Naive thymus-derived CD4-positive, alpha-beta T cell (primary cell): ENCODE measurements at regions of chr10 and their contacts with region 1.

Region 1: DNA sequence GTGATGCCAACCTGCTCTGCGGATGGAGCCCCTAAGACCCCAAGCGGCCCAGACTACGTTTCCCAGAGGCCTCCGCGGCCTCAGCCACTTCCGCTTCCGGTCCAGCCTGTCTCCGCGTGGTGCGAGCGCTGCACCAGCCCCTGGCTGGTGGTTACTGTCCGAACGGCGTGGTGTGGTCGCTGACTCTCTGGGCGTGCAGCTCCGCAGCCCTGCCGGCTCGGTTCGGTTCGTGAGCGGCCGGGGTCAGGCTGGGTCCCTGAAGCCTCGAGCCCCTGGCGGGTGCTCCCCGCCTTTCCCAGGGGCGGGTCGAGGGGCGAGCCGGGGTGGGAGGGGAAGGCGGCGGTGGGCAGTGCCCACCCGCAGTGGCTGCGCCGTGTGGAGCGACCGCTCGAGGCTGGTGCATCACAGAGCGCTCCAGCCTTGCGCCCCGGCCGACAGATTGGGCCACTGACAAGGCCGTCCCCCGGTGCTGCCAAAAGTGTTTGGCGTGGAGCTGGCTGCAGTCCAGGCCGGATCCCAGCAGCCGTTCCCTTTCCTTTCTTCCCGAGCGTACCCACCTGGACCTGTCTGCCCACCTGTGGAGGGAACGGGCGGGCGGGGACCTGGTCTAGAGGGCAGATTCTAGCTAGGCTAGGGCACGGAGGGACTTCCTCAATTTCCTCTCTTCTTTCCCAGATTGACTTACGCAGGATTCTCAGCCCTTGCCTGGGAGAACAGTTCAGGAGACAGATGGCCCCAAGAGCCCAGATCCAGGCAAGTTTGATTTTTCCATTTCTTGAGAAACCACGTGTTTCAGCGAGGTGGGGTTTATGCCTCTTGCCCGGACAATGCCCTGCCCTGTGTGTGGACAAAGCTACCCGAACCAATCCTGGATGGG is at the start of gene ZNF485:
- DNase-seq: peak; percentile 41 to 61 (median 56)
- ATAC-seq: peak; percentile 90
- H3K4me3 ChIP-seq: peak within 1 kb of the TSS; percentile 82
- H3K4me3 Mint-ChIP-seq: peak within 1 kb of the TSS; percentile 80 to 93 (median 85)
- H3K27ac ChIP-seq: peak within 1 kb of the TSS; percentile 75
- H3K27ac Mint-ChIP-seq: peak within 1 kb of the TSS; percentile 62 to 88 (median 77)
- H3K4me1 ChIP-seq: peaks cover 11 to 12% of the 10 kb centered on the region in 2 donors
- H3K4me1 Mint-ChIP-seq: peaks cover 11 to 47% (median 45%) of the 10 kb centered on the region in 7 donors
- H3K27me3 ChIP-seq: no peaks in the 10 kb centered on the region
- H3K27me3 Mint-ChIP-seq: peaks cover 0 to 8% (median 0%) of the 10 kb centered on the region in 5 donors
- total RNA-seq, gene ZNF485: 2.9 to 13.1 (median 5.3) TPM

Region 2: DNA sequence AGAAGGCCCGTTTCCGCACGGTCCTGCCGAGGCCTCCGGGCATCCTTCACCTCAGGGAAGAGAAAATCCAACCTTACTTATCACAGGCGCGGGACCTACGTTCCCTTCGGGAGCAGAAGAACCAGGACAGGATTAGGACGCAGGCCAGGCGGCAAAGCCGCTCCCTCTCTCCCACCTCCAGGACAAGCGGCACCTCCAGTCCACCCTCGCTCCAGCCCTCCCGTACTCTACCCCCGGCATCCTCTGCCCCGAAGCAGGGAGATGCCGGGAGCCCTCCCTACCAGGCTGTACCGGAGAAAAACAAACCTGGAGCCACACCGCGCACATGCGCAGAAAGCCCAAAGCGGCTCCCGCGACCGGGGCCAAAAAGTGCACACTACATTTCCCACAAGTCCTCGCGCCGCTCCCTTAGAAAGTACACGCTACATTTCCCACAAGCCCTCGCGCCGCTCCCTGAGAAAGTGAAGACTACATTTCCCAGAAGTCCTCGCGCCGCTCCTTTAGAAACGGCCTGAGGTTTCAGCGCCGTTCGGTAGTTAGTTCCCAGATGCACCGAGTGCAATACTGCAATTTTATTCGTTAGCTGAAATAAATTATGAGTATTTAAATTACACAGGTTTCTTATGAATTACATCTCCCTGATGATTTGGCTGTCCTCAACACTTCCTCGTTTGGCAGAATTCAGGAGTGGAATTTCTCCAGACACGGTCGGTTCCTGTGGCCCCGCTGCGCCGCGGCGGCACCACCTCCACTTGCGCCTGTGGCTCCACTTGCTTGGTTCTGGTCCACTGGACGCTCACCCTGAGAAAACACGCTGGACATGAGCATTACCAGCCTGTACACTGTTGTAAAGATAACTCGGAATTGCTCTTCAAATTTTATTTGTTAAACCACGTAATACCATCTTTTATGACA is 1053.8 kb before region 1 on chr10:
- CTCF ChIA-PET with region 1: no interaction called
- POLR2A ChIA-PET with region 1: no interaction called
- intact Hi-C with region 1: loop called in 1 of 2 experiments (anchors 1 kb)
- DNase-seq: peak; percentile 83 to 92 (median 91)
- ATAC-seq: peak; percentile 98
- H3K4me3 ChIP-seq: peak overlapping the region; percentile 95
- H3K4me3 Mint-ChIP-seq: peak overlapping the region; percentile 96 to 100 (median 98)
- H3K27ac ChIP-seq: peak overlapping the region; percentile 87
- H3K27ac Mint-ChIP-seq: peak overlapping the region; percentile 86 to 98 (median 96)
- H3K4me1 ChIP-seq: peaks cover 0 to 16% of the 10 kb centered on the region in 2 donors
- H3K4me1 Mint-ChIP-seq: peaks cover 24 to 49% (median 45%) of the 10 kb centered on the region in 7 donors
- H3K27me3 ChIP-seq: no peaks in the 10 kb centered on the region
- H3K27me3 Mint-ChIP-seq: no peaks in the 10 kb centered on the region

Region 3: DNA sequence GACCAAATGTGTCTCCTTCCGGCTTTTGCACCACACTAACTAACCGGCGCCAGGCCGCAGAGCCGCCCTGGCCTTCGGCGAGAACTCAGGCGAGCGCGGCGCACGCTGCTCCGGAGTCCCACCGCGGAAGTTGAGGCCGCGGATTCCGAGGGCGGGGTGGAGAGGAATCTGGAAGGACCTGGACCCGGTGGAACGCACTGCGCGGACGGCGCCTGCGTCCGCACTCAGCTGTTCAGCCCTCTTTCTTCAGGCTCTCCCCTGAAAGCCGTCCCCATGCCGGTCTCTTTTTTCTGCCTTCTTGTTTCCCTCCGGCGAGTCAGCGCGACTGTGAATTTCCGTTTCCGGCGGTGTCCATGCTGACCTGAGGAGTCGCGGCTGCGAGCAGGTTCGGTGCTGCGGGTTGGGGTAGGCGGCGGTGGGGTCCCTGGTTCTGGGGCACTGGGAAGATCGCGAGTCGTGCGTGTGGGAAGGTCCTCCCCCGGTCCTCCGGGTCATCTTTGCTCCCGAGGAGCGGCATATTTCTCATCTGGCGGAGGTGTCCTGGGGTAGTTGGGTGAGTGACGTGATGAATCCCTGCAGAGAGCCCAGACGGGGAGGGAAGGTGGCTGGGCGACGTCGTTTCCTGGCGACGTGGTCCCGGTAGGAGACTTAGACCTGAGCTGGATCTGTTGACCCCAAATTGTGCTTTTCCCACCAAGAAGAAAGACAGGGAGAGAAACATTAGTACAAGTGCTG is 823.9 kb before region 1 on chr10 and contains the start of gene BMS1:
- CTCF ChIA-PET with region 1: no interaction called
- POLR2A ChIA-PET with region 1: no interaction called
- intact Hi-C with region 1: loop called in 1 of 2 experiments (anchors 1 kb)
- DNase-seq: peak; percentile 78 to 91 (median 86)
- ATAC-seq: peak; percentile 95
- H3K4me3 ChIP-seq: peak within 1 kb of the TSS; percentile 86
- H3K4me3 Mint-ChIP-seq: peak within 1 kb of the TSS; percentile 89 to 100 (median 96)
- H3K27ac ChIP-seq: peak within 1 kb of the TSS; percentile 83
- H3K27ac Mint-ChIP-seq: peak within 1 kb of the TSS; percentile 88 to 98 (median 94)
- H3K4me1 ChIP-seq: peaks cover 0 to 13% of the 10 kb centered on the region in 2 donors
- H3K4me1 Mint-ChIP-seq: peaks cover 10 to 60% (median 45%) of the 10 kb centered on the region in 7 donors
- H3K27me3 ChIP-seq: no peaks in the 10 kb centered on the region
- H3K27me3 Mint-ChIP-seq: peaks cover 0 to 3% (median 0%) of the 10 kb centered on the region in 5 donors
- total RNA-seq, gene BMS1: 9.7 to 20.0 (median 16.9) TPM

Region 4: GRCh38 chr10:43594944-43595589 is 11.5 kb before region 1 on chr10:
- CTCF ChIA-PET with region 1: no interaction called
- POLR2A ChIA-PET with region 1: interaction called, 3 read pairs
- intact Hi-C with region 1: loop called in 1 of 2 experiments (anchors 1 kb)
- DNase-seq: peak in 7 of 9 donors; percentile 18 to 44 (median 26)
- ATAC-seq: peak; percentile 76
- H3K4me3 ChIP-seq: peak overlapping the region; percentile 60
- H3K4me3 Mint-ChIP-seq: peak overlapping the region; percentile 58 to 92 (median 83)
- H3K27ac ChIP-seq: peak overlapping the region; percentile 26
- H3K27ac Mint-ChIP-seq: peak overlapping the region; percentile 62 to 92 (median 83)
- H3K4me1 ChIP-seq: peaks cover 23 to 24% of the 10 kb centered on the region in 2 donors
- H3K4me1 Mint-ChIP-seq: peaks cover 23 to 41% (median 27%) of the 10 kb centered on the region in 7 donors
- H3K27me3 ChIP-seq: no peaks in the 10 kb centered on the region
- H3K27me3 Mint-ChIP-seq: peaks cover 0 to 8% (median 0%) of the 10 kb centered on the region in 5 donors

Region 5: DNA sequence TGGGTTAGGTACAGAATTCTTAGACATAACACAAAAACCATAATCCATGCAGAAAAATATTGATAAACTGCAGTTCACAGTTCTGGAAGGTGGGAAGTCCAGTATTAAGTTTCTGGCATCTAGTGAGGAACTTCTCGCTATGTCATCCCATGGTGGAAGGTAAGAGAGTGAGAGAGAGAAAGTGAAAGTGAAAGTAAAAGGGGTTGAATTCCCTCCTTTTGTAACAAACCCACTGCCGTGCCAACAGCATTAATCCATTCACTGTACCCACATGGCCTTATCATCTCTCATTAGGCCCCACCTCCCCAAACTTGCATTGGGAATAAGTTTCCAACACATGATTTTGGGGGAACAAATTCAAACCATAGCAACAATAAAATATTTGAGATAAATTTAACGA is 16.8 kb after region 1 on chr10:
- CTCF ChIA-PET with region 1: no interaction called
- POLR2A ChIA-PET with region 1: interaction called, 4 read pairs
- intact Hi-C with region 1: loop called in 1 of 2 experiments (anchors 1 kb)
- DNase-seq: peak in 5 of 9 donors; percentile 21 to 45 (median 34)
- ATAC-seq: peak; percentile 40
- H3K4me3 ChIP-seq: peak overlapping the region; percentile 36
- H3K4me3 Mint-ChIP-seq: peak overlapping the region; percentile 67 to 95 (median 79)
- H3K27ac ChIP-seq: peak overlapping the region; percentile 34
- H3K27ac Mint-ChIP-seq: peak overlapping the region; percentile 45 to 91 (median 81)
- H3K4me1 ChIP-seq: no peaks in the 10 kb centered on the region
- H3K4me1 Mint-ChIP-seq: peaks cover 0 to 28% (median 18%) of the 10 kb centered on the region in 7 donors
- H3K27me3 ChIP-seq: no peaks in the 10 kb centered on the region
- H3K27me3 Mint-ChIP-seq: no peaks in the 10 kb centered on the region

Region 6: DNA sequence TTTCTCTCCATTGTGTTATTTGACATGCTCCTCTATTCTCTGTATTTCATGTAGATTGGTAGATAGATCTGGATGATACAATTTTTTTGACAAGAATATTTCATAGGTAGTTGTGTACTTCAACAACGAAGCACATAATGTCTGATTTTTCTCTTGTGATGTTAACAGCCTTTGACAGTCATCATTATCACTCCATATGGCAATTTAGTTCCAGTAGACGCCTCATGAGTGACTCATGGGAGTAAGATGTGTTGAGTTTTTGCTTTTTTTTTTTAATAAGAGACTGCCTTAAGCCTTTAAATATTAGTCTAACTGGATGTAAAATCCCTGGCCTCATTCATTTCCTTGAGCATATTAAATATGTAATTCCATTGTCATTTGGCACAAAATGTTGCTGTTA is 165.6 kb after region 1 on chr10:
- CTCF ChIA-PET with region 1: no interaction called
- POLR2A ChIA-PET with region 1: no interaction called
- intact Hi-C with region 1: no loop called
- DNase-seq: no peak
- ATAC-seq: no peak
- H3K4me3 ChIP-seq: no peak overlapping the region
- H3K4me3 Mint-ChIP-seq: no peak overlapping the region
- H3K27ac ChIP-seq: no peak overlapping the region
- H3K27ac Mint-ChIP-seq: no peak overlapping the region
- H3K4me1 ChIP-seq: no peaks in the 10 kb centered on the region
- H3K4me1 Mint-ChIP-seq: peaks cover 0 to 1% (median 0%) of the 10 kb centered on the region in 7 donors
- H3K27me3 ChIP-seq: no peaks in the 10 kb centered on the region
- H3K27me3 Mint-ChIP-seq: peaks cover 0 to 18% (median 0%) of the 10 kb centered on the region in 5 donors